ENCODE measurements at regions of chr20 and their contacts with region 1.

Region 1: DNA sequence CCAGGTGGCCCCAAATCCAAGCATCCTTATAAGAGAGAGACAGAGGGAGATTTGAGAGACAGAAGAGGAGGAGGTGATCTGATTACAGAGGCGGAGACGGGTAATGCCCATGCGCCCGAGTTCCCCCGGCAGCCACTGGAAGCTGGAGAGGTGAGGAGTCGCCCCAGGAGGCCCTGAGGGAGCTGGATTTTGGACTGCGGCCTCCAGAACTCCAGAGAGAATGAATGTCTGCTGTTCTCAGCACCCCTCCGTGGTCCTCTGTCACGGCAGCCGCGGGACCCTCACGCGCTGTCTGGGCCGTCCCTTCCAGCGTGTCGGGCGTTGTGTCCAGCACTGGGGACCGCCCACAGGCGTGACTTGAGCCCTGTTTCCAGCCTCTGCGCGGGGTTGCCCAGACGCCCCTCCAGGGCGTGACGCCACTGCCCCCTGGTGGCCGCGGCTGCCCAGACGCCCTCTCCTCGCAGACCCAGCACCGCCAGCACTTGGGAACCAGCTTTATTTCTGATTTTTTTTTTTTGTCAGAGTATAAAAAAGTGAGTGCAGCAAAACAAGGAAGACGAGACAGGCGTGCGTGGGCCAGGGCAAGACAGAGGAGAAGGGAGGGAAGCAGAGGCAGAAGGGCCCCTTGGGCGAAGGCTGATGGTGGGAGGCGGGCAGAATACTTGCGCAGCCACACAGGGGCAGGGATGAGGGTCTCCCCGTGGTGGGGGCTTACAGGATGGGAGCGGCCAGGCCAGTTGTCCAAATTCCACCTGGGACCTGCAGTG is 4.1 kb upstream of the ZNF512B start:
- DNase-seq: peak; percentile 93
- H3K4me3 ChIP-seq: peak overlapping the region in 3 of 4 donors; percentile 33 to 46 (median 45)
- H3K27ac ChIP-seq: peak overlapping the region; percentile 59 to 66 (median 62)
- H3K4me1 ChIP-seq: peaks cover 0 to 27% (median 23%) of the 10 kb centered on the region in 4 donors
- H3K27me3 ChIP-seq: peaks cover 0 to 12% (median 3%) of the 10 kb centered on the region in 3 donors
- CTCF ChIP-seq: peak; percentile 91 to 98 (median 94)
- EP300 ChIP-seq: no peak
- POLR2A ChIP-seq: no peak

Region 2: GRCh38 chr20:63216041-63216848 is 757.6 kb before region 1 on chr20 and contains the start of gene YTHDF1:
- intact Hi-C with region 1: loop called (anchors 10 kb)
- DNase-seq: peak; percentile 98
- H3K4me3 ChIP-seq: peak within 1 kb of the TSS; percentile 65 to 94 (median 92)
- H3K27ac ChIP-seq: peak within 1 kb of the TSS; percentile 78 to 84 (median 82)
- H3K4me1 ChIP-seq: peaks cover 0 to 49% (median 43%) of the 10 kb centered on the region in 4 donors
- H3K27me3 ChIP-seq: no peaks in the 10 kb centered on the region
- CTCF ChIP-seq: no peak
- EP300 ChIP-seq: peak in 1 of 4 donors; percentile 57
- POLR2A ChIP-seq: peak in 1 of 2 donors; percentile 43
- total RNA-seq, gene YTHDF1: 20.2 to 25.0 (median 23.4) TPM

Region 3: GRCh38 chr20:63360850-63361518 is 612.8 kb before region 1 on chr20 and contains the start of gene CHRNA4:
- intact Hi-C with region 1: no loop called
- DNase-seq: no peak
- H3K4me3 ChIP-seq: peak within 1 kb of the TSS in 1 of 4 donors; percentile 4
- H3K27ac ChIP-seq: no peak within 1 kb of the TSS
- H3K4me1 ChIP-seq: peaks cover 0 to 11% (median 8%) of the 10 kb centered on the region in 4 donors
- H3K27me3 ChIP-seq: peaks cover 27 to 86% (median 61%) of the 10 kb centered on the region in 3 donors
- CTCF ChIP-seq: no peak
- EP300 ChIP-seq: no peak
- POLR2A ChIP-seq: no peak
- total RNA-seq, gene CHRNA4: 1.1 TPM in 1 of 4 donors, not detected in the others

Region 4: DNA sequence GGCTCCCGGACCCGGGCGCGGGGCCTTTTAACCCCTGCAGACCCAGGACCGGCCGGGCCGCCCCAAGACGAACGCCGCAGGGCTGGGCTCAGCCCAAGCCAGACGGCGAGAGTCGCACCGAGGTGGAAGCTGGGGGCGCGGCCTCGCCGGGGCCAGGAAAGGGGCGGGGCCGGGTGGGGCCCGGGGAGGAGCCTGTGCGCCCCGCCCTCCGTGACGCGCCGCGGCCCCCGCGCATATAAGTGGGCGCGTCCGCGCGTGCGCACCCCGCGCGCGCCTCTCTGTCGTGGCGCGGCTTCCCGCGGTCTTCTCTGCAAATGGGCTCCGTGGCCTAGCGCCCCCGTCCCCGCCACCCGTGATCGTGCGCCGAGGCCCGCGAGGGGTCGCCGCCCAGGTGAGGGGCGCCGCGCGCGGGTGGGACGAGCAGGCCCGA is 453.3 kb before region 1 on chr20 and contains the start of gene PPDPF:
- intact Hi-C with region 1: loop called (anchors 5 kb)
- DNase-seq: peak; percentile 91
- H3K4me3 ChIP-seq: peak within 1 kb of the TSS; percentile 69 to 97 (median 94)
- H3K27ac ChIP-seq: peak within 1 kb of the TSS; percentile 89 to 98 (median 94)
- H3K4me1 ChIP-seq: peaks cover 0 to 36% (median 28%) of the 10 kb centered on the region in 4 donors
- H3K27me3 ChIP-seq: no peaks in the 10 kb centered on the region
- CTCF ChIP-seq: no peak
- EP300 ChIP-seq: no peak
- POLR2A ChIP-seq: peak in 1 of 2 donors; percentile 58
- total RNA-seq, gene PPDPF: 82.8 to 244 (median 146) TPM

Region 5: GRCh38 chr20:63537525-63538203 is 436.2 kb before region 1 on chr20:
- intact Hi-C with region 1: loop called (anchors 2 kb)
- DNase-seq: peak; percentile 90
- H3K4me3 ChIP-seq: peak overlapping the region in 3 of 4 donors; percentile 20 to 34 (median 26)
- H3K27ac ChIP-seq: peak overlapping the region in 3 of 4 donors; percentile 26 to 46 (median 31)
- H3K4me1 ChIP-seq: peaks cover 0 to 11% (median 9%) of the 10 kb centered on the region in 4 donors
- H3K27me3 ChIP-seq: peaks cover 13 to 49% (median 41%) of the 10 kb centered on the region in 3 donors
- CTCF ChIP-seq: peak; percentile 89 to 98 (median 95)
- EP300 ChIP-seq: no peak
- POLR2A ChIP-seq: peak in 1 of 2 donors; percentile 64

Region 6: DNA sequence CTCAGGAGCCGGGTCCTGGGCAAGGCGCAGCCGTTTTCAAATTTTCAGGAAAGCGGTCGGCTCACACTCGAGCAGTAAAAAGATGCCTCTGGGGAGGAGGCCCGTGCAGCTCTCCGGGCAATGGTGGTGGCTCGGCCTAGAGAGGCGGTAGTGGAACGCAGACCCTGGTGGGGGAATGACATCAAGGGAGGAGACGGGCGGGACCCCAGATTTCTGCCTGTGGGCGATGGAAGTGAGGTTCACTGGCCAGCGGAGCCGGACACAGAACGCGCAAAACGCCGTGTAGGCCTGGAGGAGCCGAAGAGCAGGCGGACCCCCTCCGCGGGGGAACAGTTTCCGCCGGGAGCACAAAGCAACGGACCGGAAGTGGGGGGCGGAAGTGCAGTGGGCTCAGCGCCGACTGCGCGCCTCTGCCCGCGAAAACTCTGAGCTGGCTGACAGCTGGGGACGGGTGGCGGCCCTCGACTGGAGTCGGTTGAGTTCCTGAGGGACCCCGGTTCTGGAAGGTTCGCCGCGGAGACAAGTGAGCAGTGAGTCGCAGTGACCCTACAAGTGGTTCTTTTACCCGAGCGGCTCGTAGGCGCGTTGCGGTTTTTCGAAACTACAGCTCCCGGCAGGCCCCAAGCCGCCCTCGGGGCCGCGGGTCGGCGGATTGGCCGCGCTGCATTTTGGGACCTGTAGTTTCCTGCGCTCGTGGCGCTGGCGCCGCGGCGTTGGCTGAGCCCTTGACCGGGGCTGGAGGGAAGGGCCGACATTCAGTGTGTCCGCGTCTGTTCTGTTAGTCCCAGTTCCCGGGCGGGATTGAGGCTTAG is 315.7 kb before region 1 on chr20 and contains the start of gene RTEL1:
- intact Hi-C with region 1: loop called (anchors 10 kb)
- DNase-seq: peak; percentile 96
- H3K4me3 ChIP-seq: peak within 1 kb of the TSS; percentile 67 to 80 (median 70)
- H3K27ac ChIP-seq: peak within 1 kb of the TSS; percentile 88 to 92 (median 90)
- H3K4me1 ChIP-seq: peaks cover 0 to 39% (median 34%) of the 10 kb centered on the region in 4 donors
- H3K27me3 ChIP-seq: no peaks in the 10 kb centered on the region
- CTCF ChIP-seq: peak in 1 of 4 experiments; percentile 15
- EP300 ChIP-seq: no peak
- POLR2A ChIP-seq: peak; percentile 39 to 60
- total RNA-seq, gene RTEL1: 19.6 to 44.3 (median 31.4) TPM

Region 7: DNA sequence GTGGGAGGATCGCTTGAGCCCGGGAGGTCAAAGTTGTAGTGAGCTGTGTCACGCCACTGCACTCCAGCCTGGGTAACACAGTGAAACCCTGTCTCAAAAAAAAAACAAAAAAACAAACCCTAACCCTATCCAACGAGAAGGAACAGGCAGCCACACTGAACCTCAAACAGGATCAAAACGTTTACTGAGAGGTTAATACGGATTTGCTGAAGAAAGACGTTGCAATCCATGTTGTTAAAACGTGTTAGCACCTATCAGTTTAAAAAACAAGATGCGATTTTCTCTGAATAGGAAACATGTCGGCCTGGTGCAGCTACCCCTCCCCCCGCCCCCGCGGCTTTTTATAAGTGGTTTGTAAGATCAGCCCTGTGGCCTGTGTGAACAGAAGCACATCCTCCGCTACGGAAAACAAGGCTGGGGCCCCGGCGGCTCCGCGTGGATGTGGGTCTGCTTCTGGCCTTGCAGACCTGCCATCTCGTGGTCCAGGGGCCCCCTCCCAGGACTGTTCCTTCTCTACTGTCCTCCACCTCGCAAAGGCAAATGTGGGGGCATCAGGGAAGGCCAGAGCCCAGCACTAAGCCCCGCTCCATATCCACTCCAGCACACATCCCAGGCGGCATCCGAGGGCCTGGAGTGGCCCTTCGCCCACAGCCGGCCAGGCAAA is 222.9 kb before region 1 on chr20:
- intact Hi-C with region 1: no loop called
- DNase-seq: no peak
- H3K4me3 ChIP-seq: no peak overlapping the region
- H3K27ac ChIP-seq: no peak overlapping the region
- H3K4me1 ChIP-seq: no peaks in the 10 kb centered on the region
- H3K27me3 ChIP-seq: no peaks in the 10 kb centered on the region
- CTCF ChIP-seq: no peak
- EP300 ChIP-seq: no peak
- POLR2A ChIP-seq: no peak

Region 8: DNA sequence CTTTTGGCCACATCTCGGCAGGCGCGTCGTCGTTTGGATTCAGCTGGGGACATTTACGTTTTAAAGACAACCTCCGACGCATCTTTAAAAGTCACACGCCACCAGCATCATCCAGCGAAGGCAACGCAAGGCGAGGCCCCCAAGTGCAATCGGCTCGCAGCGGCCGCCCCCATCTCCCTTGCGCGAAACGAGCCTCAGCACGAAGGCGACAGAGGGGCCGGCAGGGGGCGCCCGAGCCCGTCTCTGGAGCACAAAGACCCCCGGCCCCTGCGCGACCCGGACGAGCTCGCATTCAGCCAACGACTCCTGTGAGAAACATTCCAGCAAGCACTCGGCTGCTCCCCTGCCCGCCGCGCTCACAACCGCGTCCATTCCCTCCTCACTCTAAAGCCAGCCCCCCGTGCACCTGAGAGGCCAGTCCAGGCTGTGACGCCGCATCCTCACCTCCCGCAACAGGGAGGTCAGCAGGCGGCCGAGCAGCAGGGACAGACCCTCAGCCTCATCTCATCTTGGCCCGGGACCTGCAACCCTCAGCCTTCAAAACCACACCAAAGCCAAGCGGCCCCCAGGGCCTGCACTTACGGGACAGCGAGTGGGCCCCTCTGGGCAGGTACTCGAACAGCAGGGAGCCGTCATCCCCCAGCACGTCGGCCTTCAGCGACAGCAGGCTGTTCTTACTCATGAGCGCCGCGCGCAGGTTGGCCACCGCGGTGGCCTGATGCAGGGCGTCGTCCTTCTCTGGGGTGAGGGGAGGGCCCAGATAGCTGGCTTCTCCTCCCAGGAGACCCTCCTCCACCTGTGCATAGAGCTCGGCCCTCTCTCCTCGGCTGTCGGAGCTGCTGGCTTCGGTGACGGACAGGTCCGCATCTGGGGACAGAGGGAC is 198.5 kb before region 1 on chr20:
- intact Hi-C with region 1: loop called (anchors 5 kb)
- DNase-seq: no peak
- H3K4me3 ChIP-seq: peak overlapping the region in 2 of 4 donors; percentile 19 to 24
- H3K27ac ChIP-seq: no peak overlapping the region
- H3K4me1 ChIP-seq: peaks cover 0 to 9% (median 6%) of the 10 kb centered on the region in 4 donors
- H3K27me3 ChIP-seq: peaks cover 0 to 32% (median 2%) of the 10 kb centered on the region in 3 donors
- CTCF ChIP-seq: peak in 3 of 4 experiments; percentile 38 to 73 (median 60)
- EP300 ChIP-seq: no peak
- POLR2A ChIP-seq: no peak

Region 9: DNA sequence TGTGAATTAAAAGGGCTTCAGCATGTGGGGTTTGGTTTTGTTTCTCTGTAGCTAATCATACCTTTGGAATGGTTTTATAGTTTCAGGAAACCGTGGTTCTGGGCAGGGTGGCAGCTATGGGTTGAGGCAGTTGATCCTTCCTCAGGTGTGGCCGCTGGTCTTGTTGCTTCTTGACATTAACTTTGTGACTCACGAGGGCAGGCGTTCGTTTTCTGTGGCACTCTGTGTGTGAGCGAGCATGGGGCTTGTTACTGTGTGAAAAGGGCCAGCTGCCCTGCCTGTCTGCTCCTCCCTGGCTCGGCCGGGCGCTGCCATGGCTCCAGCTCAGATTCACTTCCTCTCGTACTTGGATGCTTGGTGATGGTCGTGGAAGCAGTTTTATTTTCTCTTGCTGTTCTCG is 62.6 kb before region 1 on chr20:
- intact Hi-C with region 1: loop called (anchors 1 kb)
- DNase-seq: no peak
- H3K4me3 ChIP-seq: no peak overlapping the region
- H3K27ac ChIP-seq: no peak overlapping the region
- H3K4me1 ChIP-seq: peaks cover 0 to 25% (median 5%) of the 10 kb centered on the region in 4 donors
- H3K27me3 ChIP-seq: no peaks in the 10 kb centered on the region
- CTCF ChIP-seq: no peak
- EP300 ChIP-seq: no peak
- POLR2A ChIP-seq: no peak

Region 10: GRCh38 chr20:63942250-63942959 is 31.4 kb before region 1 on chr20:
- intact Hi-C with region 1: no loop called
- DNase-seq: peak; percentile 65
- H3K4me3 ChIP-seq: no peak overlapping the region
- H3K27ac ChIP-seq: peak overlapping the region; percentile 7 to 73 (median 41)
- H3K4me1 ChIP-seq: peaks cover 0 to 20% (median 7%) of the 10 kb centered on the region in 4 donors
- H3K27me3 ChIP-seq: no peaks in the 10 kb centered on the region
- CTCF ChIP-seq: no peak
- EP300 ChIP-seq: no peak
- POLR2A ChIP-seq: no peak